ENCODE measurements at regions of chr9 and their contacts with region 1.

Region 1: GRCh38 chr9:12988253-12988652 is 213.4 kb downstream of the LURAP1L start:
- DNase-seq: no peak
- ATAC-seq: no peak

Region 2: GRCh38 chr9:12784461-12785259 is 203.6 kb before region 1 on chr9:
- intact Hi-C with region 1: loop called in 1 of 2 experiments (anchors 10 kb)
- DNase-seq: no peak
- ATAC-seq: peak in 1 of 2 donors; percentile 58

Region 3: DNA sequence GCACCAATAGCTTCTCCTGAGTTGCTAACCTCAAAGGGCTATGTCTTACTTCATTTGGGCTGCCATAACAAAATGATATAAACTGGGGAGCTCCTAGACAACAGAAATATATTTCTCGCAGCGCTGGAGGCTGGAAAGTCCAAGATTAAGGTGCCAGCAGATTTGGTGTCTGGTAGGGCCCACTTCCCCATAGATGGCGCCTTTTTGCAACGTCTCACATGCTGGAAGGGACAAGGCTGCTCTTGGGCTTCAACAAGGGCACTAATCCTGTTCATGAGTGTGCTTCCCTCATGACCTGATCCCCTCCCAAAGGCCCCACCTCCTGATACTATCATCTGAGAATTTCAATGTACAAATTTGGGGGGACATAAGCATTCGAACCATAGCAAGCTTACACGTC is 68.5 kb after region 1 on chr9:
- intact Hi-C with region 1: no loop called
- DNase-seq: no peak
- ATAC-seq: no peak

Region 4: DNA sequence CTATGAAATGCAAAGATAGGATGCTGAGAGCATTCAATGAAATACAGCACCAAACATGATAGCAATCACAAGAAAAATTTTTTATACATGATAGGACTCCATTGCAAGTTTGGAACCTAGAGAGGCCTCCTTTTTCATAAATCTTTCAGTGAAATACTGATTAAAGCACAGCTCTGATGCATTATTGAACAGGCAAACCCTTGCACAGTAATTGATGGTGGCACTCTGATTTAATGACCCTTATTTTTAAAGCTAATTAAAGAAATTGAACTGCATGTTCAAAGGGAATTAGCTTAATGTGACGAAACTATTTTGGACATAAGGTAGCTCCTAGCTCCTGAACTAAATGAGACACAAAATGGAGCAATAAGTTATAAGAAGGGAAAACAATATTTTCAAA is 246.7 kb after region 1 on chr9:
- intact Hi-C with region 1: no loop called
- DNase-seq: no peak
- ATAC-seq: no peak